ENCODE measurements at regions of chr1 and their contacts with region 1.

Region 1: DNA sequence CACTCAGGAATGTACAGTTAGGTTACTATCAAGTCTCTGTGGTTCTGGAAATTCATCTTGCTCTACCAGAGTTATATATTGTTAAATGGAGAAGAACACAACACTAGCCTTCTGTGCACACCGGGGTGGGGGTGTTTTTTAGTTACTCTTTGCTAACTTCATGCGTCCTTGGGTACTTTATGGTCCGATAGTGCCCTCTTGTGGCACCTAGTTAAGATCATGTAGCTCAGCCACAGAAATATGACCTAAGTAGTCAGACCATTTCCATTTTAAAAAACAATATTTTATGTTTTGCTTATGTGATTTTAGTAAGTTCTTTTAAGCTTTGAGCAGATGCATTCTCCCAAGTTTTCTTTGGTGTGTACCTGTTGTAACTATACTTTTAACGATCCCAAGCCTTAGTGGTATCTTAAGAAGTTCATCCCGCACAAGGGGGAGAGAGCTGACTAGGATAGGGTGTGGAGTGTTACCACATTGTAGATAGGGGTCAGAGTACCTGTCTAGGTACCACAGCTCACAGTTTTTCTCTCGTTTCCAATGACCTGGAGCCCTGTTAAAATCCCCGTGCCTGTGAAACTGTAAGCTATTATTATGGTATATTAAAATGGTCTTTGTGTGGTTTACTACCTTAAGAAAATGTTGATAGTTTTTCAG is 20.6 kb upstream of the SH3D21 start:
- DNase-seq: peak; percentile 89
- ATAC-seq: peak; percentile 92
- H3K4me3 ChIP-seq: no peak overlapping the region
- H3K4me3 Mint-ChIP-seq: no peak overlapping the region
- H3K27ac ChIP-seq: peak overlapping the region in 1 of 2 donors; percentile 34
- H3K27ac Mint-ChIP-seq: peak overlapping the region; percentile 83
- H3K4me1 ChIP-seq: no peaks in the 10 kb centered on the region
- H3K4me1 Mint-ChIP-seq: peaks cover 8% of the 10 kb centered on the region
- H3K27me3 ChIP-seq: no peaks in the 10 kb centered on the region
- H3K27me3 Mint-ChIP-seq: no peaks in the 10 kb centered on the region
- CTCF ChIP-seq: peak; percentile 84

Region 2: DNA sequence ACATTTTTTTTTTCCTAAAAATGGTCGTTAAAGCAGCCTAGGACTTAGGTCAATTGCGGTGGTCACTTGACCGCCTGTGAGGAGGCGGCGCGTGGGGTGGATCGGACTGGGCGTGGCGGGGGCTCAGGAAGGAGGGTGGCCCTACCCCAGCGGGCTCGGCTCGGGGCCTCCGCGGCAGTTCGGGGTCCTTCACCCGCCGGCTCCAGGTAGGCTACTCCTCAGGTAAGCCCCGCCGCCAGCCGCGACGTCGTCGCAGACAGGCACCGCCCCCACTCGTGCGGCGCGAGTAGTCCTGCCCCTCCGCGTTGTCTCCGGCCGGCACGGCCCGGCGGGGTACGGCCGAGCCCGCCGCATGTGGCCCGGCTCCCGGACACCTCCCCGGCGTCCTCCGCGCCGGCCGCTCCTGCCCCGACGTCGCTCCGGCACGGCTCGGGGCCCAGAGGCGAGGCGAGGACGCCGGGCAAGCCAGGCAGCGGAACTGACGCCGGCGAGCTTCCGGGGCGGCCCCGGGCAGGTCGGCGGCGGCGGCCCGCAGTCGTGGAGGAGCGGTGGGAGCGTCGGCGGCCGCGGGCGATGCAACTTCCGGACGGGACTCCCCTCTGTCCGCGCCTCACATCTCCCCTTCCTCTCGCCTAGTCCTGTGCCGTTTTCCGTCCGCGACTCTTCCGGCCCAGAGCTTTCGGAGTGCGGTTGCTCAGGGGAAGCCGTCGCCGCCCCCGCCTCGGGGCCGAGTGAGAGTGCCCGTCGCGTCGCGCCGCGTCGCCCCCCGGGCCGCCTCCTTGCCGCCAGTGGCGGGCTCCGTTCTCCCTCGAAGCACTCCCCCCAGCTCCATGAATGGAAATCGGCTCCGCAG is 354.8 kb before region 1 on chr1 and contains the start of gene AGO3:
- CTCF ChIA-PET with region 1: no interaction called
- POLR2A ChIA-PET with region 1: no interaction called
- intact Hi-C with region 1: no loop called
- DNase-seq: peak; percentile 95
- ATAC-seq: peak; percentile 86
- H3K4me3 ChIP-seq: peak within 1 kb of the TSS; percentile 71 to 86 (median 80)
- H3K4me3 Mint-ChIP-seq: peak within 1 kb of the TSS; percentile 86
- H3K27ac ChIP-seq: peak within 1 kb of the TSS; percentile 83 to 98
- H3K27ac Mint-ChIP-seq: peak within 1 kb of the TSS; percentile 91
- H3K4me1 ChIP-seq: peaks cover 13 to 14% of the 10 kb centered on the region in 2 donors
- H3K4me1 Mint-ChIP-seq: peaks cover 21% of the 10 kb centered on the region
- H3K27me3 ChIP-seq: no peaks in the 10 kb centered on the region
- H3K27me3 Mint-ChIP-seq: no peaks in the 10 kb centered on the region
- CTCF ChIP-seq: no peak
- total RNA-seq, gene AGO3: 44.9 and 52.5 TPM in 2 replicates

Region 3: GRCh38 chr1:36099681-36100341 is 185.8 kb before region 1 on chr1:
- CTCF ChIA-PET with region 1: interaction called, 56 read pairs
- POLR2A ChIA-PET with region 1: no interaction called
- intact Hi-C with region 1: loop called (anchors 1 kb)
- DNase-seq: peak; percentile 81
- ATAC-seq: peak; percentile 86
- H3K4me3 ChIP-seq: peak overlapping the region in 1 of 5 experiments; percentile 9
- H3K4me3 Mint-ChIP-seq: no peak overlapping the region
- H3K27ac ChIP-seq: no peak overlapping the region
- H3K27ac Mint-ChIP-seq: no peak overlapping the region
- H3K4me1 ChIP-seq: peaks cover 0 to 7% of the 10 kb centered on the region in 2 donors
- H3K4me1 Mint-ChIP-seq: peaks cover 2% of the 10 kb centered on the region
- H3K27me3 ChIP-seq: no peaks in the 10 kb centered on the region
- H3K27me3 Mint-ChIP-seq: no peaks in the 10 kb centered on the region
- CTCF ChIP-seq: peak; percentile 93

Region 4: GRCh38 chr1:36187800-36188593 is 97.6 kb before region 1 on chr1:
- CTCF ChIA-PET with region 1: interaction called, 32 read pairs
- POLR2A ChIA-PET with region 1: interaction called, 5 read pairs
- intact Hi-C with region 1: loop called (anchors 1 kb)
- DNase-seq: peak; percentile 87
- ATAC-seq: peak; percentile 98
- H3K4me3 ChIP-seq: no peak overlapping the region
- H3K4me3 Mint-ChIP-seq: no peak overlapping the region
- H3K27ac ChIP-seq: no peak overlapping the region
- H3K27ac Mint-ChIP-seq: peak overlapping the region; percentile 16
- H3K4me1 ChIP-seq: peaks cover 0 to 4% of the 10 kb centered on the region in 2 donors
- H3K4me1 Mint-ChIP-seq: peaks cover 3% of the 10 kb centered on the region
- H3K27me3 ChIP-seq: no peaks in the 10 kb centered on the region
- H3K27me3 Mint-ChIP-seq: no peaks in the 10 kb centered on the region
- CTCF ChIP-seq: peak; percentile 82

Region 5: DNA sequence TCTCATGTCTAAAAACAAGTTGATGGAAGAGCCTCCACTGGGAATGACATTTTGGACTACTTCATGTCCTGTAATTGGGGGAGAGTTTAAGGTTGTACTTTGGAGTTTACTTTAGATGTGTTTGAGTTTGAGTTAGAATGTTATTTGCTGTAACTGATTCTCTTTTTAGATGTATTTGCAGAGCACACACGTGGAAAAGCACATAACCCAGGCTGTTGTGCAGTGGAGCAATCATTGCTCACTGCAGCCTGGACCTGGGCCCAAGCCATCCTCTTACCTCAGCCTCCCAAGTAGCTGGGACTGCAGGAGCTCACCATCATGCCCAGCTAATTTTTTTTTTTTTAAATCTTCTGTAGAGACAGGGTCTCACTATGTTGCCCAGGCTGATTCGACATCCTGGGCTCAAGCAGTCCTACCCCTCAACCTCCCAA is 16.2 kb before region 1 on chr1:
- CTCF ChIA-PET with region 1: interaction called, 11 read pairs
- POLR2A ChIA-PET with region 1: no interaction called
- intact Hi-C with region 1: no loop called
- DNase-seq: no peak
- ATAC-seq: no peak
- H3K4me3 ChIP-seq: no peak overlapping the region
- H3K4me3 Mint-ChIP-seq: no peak overlapping the region
- H3K27ac ChIP-seq: no peak overlapping the region
- H3K27ac Mint-ChIP-seq: no peak overlapping the region
- H3K4me1 ChIP-seq: no peaks in the 10 kb centered on the region
- H3K4me1 Mint-ChIP-seq: peaks cover 8% of the 10 kb centered on the region
- H3K27me3 ChIP-seq: no peaks in the 10 kb centered on the region
- H3K27me3 Mint-ChIP-seq: no peaks in the 10 kb centered on the region
- CTCF ChIP-seq: no peak

Region 6: DNA sequence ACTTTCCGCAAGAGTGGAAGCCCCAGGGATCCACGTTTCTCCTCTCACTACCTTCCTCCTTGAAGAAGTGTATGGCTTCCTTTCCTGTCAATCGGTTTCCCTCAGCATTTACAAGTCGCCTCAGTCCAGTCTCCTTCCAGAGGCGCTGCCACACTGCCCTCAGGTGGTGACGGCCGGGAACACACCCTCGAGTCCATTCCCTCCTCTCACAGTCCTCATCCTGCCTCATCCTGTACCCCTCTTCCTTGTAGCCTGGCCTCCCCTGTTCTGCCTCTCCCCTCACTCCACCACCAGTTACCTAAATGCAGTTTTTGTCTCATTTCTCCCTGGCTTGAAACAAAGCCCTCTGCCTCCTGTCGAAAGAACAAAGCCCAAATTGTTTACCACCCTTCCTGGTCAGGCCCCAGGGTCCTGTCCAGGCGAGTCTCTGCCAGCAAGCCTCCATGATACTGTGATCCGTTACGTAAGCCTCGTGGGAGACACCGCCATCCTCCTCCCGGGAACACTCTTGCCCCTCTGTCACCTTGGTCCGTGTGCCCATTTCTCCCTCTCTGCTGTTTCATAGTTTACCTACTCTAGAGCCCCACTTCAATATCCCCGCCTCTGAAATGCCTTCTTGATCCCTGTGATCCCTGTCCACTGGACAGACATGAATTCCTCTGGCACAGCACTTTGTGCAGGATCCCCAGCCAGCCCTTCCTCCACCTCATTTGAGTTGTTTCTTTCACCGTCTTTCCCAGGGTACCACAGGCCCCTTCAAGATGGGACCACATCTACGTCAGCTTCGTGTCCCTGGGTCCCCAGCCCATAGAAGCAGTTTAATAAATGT is 135.5 kb after region 1 on chr1:
- CTCF ChIA-PET with region 1: interaction called, 13 read pairs
- POLR2A ChIA-PET with region 1: no interaction called
- intact Hi-C with region 1: loop called (anchors 1 kb)
- DNase-seq: peak; percentile 88
- ATAC-seq: peak; percentile 100
- H3K4me3 ChIP-seq: no peak overlapping the region
- H3K4me3 Mint-ChIP-seq: no peak overlapping the region
- H3K27ac ChIP-seq: no peak overlapping the region
- H3K27ac Mint-ChIP-seq: peak overlapping the region; percentile 37
- H3K4me1 ChIP-seq: peaks cover 4 to 5% of the 10 kb centered on the region in 2 donors
- H3K4me1 Mint-ChIP-seq: peaks cover 8% of the 10 kb centered on the region
- H3K27me3 ChIP-seq: no peaks in the 10 kb centered on the region
- H3K27me3 Mint-ChIP-seq: no peaks in the 10 kb centered on the region
- CTCF ChIP-seq: peak; percentile 97